ENCODE measurements at regions of chrX and their contacts with region 1.

Region 1: DNA sequence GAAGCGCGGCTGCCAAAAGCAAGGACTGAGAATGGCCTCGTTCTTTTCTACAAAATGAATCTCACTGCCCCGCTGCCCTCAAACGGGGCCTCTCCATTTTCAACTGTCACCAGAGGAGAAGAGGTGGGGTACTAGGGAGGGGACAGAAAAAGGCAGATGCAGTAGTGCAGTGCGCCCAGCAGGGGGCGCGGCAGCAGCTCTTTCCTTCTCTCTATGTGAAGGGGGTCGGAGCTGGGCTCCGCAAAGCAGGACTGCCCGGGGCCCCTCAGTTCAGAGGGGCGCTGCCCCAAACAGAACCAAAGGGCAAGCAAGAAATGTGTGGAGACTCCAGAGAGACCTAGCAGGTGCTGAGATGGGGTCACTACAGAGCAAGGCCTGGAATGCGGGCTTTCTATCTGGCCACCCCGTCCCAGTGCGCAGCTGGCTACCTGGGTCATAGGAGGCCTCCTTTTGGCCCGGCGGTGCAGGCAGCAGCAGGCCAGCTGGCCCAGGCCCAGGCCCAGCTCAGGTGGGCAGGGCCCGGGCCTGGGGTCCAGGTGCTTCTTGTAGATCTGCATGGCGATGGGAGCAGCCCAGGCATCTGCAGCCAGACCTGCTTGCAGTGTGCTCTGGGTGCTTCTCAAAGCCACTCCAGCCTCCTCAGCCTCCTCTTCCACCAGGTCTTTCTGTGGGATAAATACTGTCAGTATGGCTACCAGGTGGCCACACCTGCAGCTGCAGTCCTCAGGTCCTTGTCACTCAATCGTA is 5.9 kb downstream of the IRAK1 start:
- DNase-seq: peak; percentile 62
- ATAC-seq: peak; percentile 67
- H3K4me3 Mint-ChIP-seq: peak overlapping the region; percentile 13
- H3K27ac Mint-ChIP-seq: peak overlapping the region; percentile 68
- H3K4me1 Mint-ChIP-seq: peaks cover 6% of the 10 kb centered on the region
- H3K27me3 Mint-ChIP-seq: no peaks in the 10 kb centered on the region

Region 2: DNA sequence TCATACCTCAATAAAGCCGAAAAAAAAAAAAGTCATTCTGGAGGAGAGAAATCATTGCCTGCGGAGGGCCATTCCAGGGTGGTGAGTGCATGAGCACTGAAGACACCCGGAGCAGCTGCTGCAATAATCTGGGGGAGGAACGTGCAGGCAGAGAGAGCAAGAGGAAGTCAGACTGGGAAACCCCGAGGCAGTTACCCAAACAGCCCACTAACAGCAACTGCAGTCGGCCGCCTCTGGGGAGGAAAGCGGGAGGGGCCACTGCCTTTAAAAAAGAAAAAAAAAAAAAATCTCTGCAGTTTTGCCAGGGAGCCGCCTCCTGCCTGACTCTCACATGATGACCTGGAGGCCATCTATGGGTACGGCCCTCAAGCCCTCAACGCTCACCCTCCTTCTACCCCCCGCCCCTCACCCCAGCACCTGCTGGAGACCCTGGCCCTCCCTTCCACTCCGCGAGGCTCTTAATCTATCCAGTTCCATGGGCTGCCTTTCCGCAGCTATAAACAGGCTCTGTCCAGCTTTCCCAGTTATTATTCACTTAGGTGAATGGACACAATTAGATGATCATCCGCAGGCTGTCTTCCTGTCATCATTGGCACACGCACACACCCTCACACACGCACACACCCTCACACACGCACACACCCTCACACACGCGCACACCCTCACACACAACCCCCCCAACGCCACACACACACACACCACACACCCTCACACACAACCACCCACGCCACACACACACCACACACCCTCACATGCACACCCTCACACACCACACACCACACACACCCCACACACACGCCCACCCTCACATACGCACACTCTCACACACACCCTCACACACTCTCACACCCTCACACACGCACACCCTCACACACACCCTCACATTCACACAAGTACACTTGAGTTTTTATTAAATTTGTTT is 112.7 kb before region 1 on chrX:
- POLR2A ChIA-PET with region 1: no interaction called
- DNase-seq: no peak
- ATAC-seq: peak; percentile 78
- H3K4me3 Mint-ChIP-seq: peak overlapping the region; percentile 71
- H3K27ac Mint-ChIP-seq: peak overlapping the region; percentile 73
- H3K4me1 Mint-ChIP-seq: peaks cover 24% of the 10 kb centered on the region
- H3K27me3 Mint-ChIP-seq: peaks cover 8% of the 10 kb centered on the region

Region 3: DNA sequence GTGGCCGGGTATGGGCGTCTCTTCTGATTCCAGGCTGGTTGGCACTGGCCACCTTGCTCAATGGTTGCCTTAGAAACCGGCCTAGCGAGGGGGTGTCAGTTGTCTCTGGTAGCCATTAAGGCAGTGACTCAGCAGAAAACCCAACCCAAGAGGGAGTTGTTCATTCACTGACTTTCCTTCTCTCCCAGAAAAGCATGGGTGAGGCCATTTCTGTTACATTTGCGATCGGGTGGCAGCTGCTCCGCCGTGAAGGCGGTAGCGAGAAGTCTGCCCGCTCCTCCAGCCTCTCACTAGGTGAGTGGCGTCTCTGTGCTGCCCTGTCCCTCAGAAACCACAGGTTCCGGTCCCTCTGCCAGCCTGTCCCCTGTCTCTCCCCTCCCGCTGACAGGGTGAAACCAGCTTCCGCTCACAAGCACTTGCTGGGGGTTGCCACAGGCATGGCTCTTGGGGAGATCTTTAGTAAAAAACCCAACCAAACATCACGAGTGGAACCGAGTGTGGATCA is 11.5 kb before region 1 on chrX:
- POLR2A ChIA-PET with region 1: interaction called, 11 read pairs
- DNase-seq: peak; percentile 47
- ATAC-seq: peak; percentile 88
- H3K4me3 Mint-ChIP-seq: peak overlapping the region; percentile 70
- H3K27ac Mint-ChIP-seq: peak overlapping the region; percentile 90
- H3K4me1 Mint-ChIP-seq: peaks cover 9% of the 10 kb centered on the region
- H3K27me3 Mint-ChIP-seq: no peaks in the 10 kb centered on the region